Activated CD8-positive, alpha-beta T cell treated with anti-CD3 and anti-CD28 coated beads for 36 hours (primary cell): ENCODE measurements at regions of chr17 and their contacts with region 1.

Region 1: GRCh38 chr17:67221062-67221998 is 23.7 kb downstream of the HELZ start:
- DNase-seq: peak; percentile 49
- ATAC-seq: peak; percentile 32
- H3K4me3 Mint-ChIP-seq: no peak overlapping the region
- H3K27ac Mint-ChIP-seq: no peak overlapping the region
- H3K4me1 Mint-ChIP-seq: peaks cover 33% of the 10 kb centered on the region
- H3K27me3 Mint-ChIP-seq: no peaks in the 10 kb centered on the region
- CTCF ChIP-seq: peak; percentile 52

Region 2: DNA sequence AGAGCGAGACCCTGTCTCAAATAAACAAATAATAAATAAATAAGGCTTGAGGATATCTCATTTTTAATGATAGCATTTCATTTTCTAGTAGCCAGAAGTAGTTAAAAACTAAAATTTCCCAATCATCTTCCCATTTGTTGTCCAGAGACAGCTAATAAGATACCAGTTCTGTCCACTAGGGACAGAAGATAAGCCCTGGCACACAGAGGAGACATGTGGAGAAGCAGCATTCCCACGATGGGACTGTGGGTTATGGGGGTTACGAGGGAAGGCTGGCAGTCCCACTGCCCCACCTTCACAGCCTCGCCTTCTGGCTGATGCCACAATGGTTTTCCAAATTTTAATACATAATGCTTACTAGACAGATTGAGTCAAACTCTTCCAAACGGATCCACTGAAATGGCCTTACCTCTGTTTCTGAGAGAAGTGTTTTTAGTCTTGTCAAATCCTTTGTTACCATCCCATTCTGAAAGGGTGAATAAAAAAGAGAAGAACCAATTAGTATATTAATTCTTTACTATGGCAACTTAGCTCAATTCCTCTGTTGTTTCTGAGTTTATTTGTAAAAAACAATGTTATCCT is 20.5 kb before region 1 on chr17:
- CTCF ChIA-PET with region 1: interaction called, 17 read pairs
- POLR2A ChIA-PET with region 1: interaction called, 3 read pairs
- intact Hi-C with region 1: no loop called
- DNase-seq: no peak
- ATAC-seq: no peak
- H3K4me3 Mint-ChIP-seq: no peak overlapping the region
- H3K27ac Mint-ChIP-seq: no peak overlapping the region
- H3K4me1 Mint-ChIP-seq: peaks cover 17% of the 10 kb centered on the region
- H3K27me3 Mint-ChIP-seq: no peaks in the 10 kb centered on the region
- CTCF ChIP-seq: peak; percentile 55

Region 3: DNA sequence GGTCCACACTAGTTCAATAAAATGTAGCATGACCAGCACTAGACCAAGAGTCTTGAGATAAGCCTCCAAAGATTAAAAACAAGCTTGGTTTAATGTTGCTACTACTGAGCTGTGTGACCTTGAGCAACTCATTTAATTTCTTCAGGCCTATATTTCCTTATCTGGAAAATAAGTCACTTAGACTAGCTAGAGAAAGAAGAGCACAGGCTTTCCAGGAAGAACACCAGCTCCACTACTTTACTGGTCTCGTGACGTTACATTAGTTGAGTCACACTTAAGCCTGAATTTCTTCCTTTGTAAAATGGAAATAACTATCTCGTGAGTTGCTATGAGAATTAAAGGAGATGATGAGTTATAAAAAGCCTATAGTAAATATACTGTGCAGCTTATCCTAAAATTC is 18.3 kb after region 1 on chr17:
- CTCF ChIA-PET with region 1: interaction called, 10 read pairs
- POLR2A ChIA-PET with region 1: interaction called, 3 read pairs
- intact Hi-C with region 1: no loop called
- DNase-seq: no peak
- ATAC-seq: no peak
- H3K4me3 Mint-ChIP-seq: no peak overlapping the region
- H3K27ac Mint-ChIP-seq: no peak overlapping the region
- H3K4me1 Mint-ChIP-seq: peaks cover 47% of the 10 kb centered on the region
- H3K27me3 Mint-ChIP-seq: no peaks in the 10 kb centered on the region
- CTCF ChIP-seq: no peak

Region 4: GRCh38 chr17:67272312-67273050 is 51.2 kb after region 1 on chr17:
- CTCF ChIA-PET with region 1: interaction called, 11 read pairs
- POLR2A ChIA-PET with region 1: no interaction called
- intact Hi-C with region 1: no loop called
- DNase-seq: peak; percentile 33
- ATAC-seq: no peak
- H3K4me3 Mint-ChIP-seq: no peak overlapping the region
- H3K27ac Mint-ChIP-seq: no peak overlapping the region
- H3K4me1 Mint-ChIP-seq: no peaks in the 10 kb centered on the region
- H3K27me3 Mint-ChIP-seq: no peaks in the 10 kb centered on the region
- CTCF ChIP-seq: no peak

Region 5: GRCh38 chr17:67293251-67294203 is 72.2 kb after region 1 on chr17:
- CTCF ChIA-PET with region 1: interaction called, 47 read pairs
- POLR2A ChIA-PET with region 1: no interaction called
- intact Hi-C with region 1: loop called (anchors 5 kb)
- DNase-seq: peak; percentile 85
- ATAC-seq: peak; percentile 99
- H3K4me3 Mint-ChIP-seq: peak overlapping the region; percentile 33
- H3K27ac Mint-ChIP-seq: no peak overlapping the region
- H3K4me1 Mint-ChIP-seq: no peaks in the 10 kb centered on the region
- H3K27me3 Mint-ChIP-seq: no peaks in the 10 kb centered on the region
- CTCF ChIP-seq: peak; percentile 91